WTC11 (cell line): ENCODE measurements at regions of chr16 and their contacts with region 1.

Region 1: GRCh38 chr16:80974649-80975376 is 31.9 kb downstream of the CMC2 start:
- DNase-seq: no peak
- ATAC-seq: 0 out of 2 replicates have a peak, but pooled peaks have one; percentile 26
- H3K4me3 Mint-ChIP-seq: no peak overlapping the region
- H3K27ac Mint-ChIP-seq: no peak overlapping the region; the same call in 1 of the 2 replicates
- H3K4me1 Mint-ChIP-seq: peaks cover 4% of the 10 kb centered on the region; the same call in 1 of the 2 replicates
- H3K27me3 Mint-ChIP-seq: no peaks in the 10 kb centered on the region
- CTCF ChIP-seq: 0 out of 2 replicates have a peak, but pooled peaks have one; percentile 38

Region 2: DNA sequence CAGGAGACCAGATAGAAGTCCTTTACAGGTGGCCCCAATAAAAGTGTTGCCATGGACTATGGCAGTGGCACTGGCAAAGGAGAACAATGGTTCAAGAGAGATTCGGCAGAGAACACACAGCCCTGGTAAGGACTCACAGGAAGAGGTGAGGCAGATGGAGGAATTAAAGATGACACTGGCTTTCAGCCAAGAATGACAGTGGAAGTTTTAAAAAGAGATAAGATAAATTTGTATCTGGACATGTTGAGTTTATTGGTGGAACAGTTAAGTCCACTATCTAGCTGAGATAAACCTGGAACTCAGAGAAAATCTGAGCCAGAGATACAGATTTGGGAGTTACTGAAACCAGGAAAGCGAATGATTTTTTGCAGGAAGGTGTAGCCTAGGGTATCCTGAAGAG is 11.7 kb after region 1 on chr16:
- CTCF ChIA-PET with region 1: interaction called, 12 read pairs
- POLR2A ChIA-PET with region 1: interaction called, 8 read pairs
- DNase-seq: no peak
- ATAC-seq: no peak
- H3K4me3 Mint-ChIP-seq: no peak overlapping the region
- H3K27ac Mint-ChIP-seq: 0 out of 2 replicates have a peak overlapping the region, but pooled peaks have one; percentile 5
- H3K4me1 Mint-ChIP-seq: peaks cover 46% of the 10 kb centered on the region
- H3K27me3 Mint-ChIP-seq: peaks cover 20% of the 10 kb centered on the region
- CTCF ChIP-seq: no peak